RWPE1 (cell line): ENCODE measurements at regions of chr2 and their contacts with region 1.

Region 1: DNA sequence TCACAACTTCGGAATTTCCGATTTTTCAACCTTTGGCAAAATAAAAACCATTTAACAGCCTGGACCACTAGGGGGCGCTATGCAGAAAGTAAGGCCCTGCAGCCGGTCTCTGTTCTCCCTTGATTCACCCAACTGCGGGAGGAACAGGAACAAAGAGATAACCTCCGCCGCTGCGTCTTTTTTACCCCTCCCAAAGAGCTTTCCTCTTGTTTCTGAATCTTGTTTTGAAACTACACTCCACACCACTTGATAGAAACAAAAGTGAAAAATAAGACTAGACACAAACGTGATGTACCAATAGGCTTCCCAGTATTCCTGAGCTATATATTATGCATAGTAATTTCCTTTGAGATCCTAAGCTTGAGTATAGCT is 231.2 kb downstream of the MYO3B start:
- DNase-seq: peak; percentile 39
- H3K27ac ChIP-seq: no peak overlapping the region
- CTCF ChIP-seq: peak; percentile 82

Region 2: GRCh38 chr2:170354855-170355780 is 54.0 kb before region 1 on chr2:
- CTCF ChIA-PET with region 1: no interaction called
- POLR2A ChIA-PET with region 1: no interaction called
- DNase-seq: no peak
- H3K27ac ChIP-seq: no peak overlapping the region
- CTCF ChIP-seq: no peak

Region 3: DNA sequence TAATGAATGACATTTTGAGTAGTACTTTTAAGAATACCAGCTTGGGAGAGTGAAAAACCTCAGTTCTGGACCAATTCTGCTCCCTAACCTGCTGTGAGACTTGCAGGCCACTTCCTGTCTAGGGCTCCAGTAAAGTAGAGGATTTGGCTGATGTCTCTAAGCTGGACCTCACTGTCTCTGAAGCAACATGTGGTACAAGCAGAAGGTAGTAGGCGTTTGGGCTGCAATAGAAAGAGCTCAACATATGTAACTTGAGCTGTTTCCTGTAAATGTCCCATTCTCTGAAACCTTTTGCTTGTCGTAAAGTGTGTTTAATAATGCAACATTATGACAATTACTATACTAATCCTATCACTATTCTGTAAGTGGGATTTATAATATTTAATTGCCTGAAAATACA is 18.1 kb before region 1 on chr2:
- CTCF ChIA-PET with region 1: interaction called, 13 read pairs
- POLR2A ChIA-PET with region 1: no interaction called
- DNase-seq: no peak
- H3K27ac ChIP-seq: no peak overlapping the region
- CTCF ChIP-seq: no peak

Region 4: GRCh38 chr2:170715062-170715931 is 306.1 kb after region 1 on chr2 and contains the start of gene SP5:
- CTCF ChIA-PET with region 1: interaction called, 10 read pairs
- POLR2A ChIA-PET with region 1: no interaction called
- DNase-seq: peak; percentile 63
- H3K27ac ChIP-seq: peak within 1 kb of the TSS; percentile 26; the same call in 1 of the 2 replicates
- CTCF ChIP-seq: no peak